ENCODE measurements at regions of chr14 and their contacts with region 1.

Region 1: DNA sequence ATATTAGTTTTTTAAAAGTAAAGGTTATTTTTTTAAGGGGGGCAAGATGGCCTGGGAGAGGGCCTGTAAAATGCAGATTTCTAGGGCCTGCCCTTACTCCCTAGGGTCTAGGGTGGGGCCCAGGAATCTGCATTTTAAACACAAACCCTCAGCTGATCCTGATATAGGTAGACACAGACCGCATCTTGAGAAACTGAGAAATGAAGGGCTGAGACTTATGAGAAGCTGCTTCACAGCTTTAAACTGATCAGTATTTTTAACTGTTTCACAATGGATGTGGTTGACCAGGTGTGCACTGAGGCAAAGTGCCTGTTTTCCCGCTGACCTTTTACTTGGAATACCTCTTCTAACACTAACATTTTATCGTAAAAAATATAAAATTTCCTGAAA is 84.0 kb downstream of the CCDC88C start:
- DNase-seq: no peak
- ATAC-seq: no peak
- H3K4me3 ChIP-seq: no peak overlapping the region
- H3K27ac ChIP-seq: no peak overlapping the region
- H3K4me1 ChIP-seq: peaks cover 5 to 44% (median 36%) of the 10 kb centered on the region in 9 donors
- H3K27me3 ChIP-seq: peaks cover 0 to 45% (median 0%) of the 10 kb centered on the region in 7 donors
- CTCF ChIP-seq: no peak

Region 2: GRCh38 chr14:91350813-91351511 is 17.3 kb after region 1 on chr14:
- intact Hi-C with region 1: loop called in 1 of 10 experiments (anchors 2 kb)
- DNase-seq: no peak
- ATAC-seq: no peak
- H3K4me3 ChIP-seq: peak overlapping the region in 1 of 10 donors; percentile 34
- H3K27ac ChIP-seq: peak overlapping the region in 1 of 10 donors; percentile 71
- H3K4me1 ChIP-seq: peaks cover 0 to 80% (median 22%) of the 10 kb centered on the region in 9 donors
- H3K27me3 ChIP-seq: peaks cover 0 to 2% (median 0%) of the 10 kb centered on the region in 7 donors
- CTCF ChIP-seq: no peak